ENCODE measurements at regions of chr15 and their contacts with region 1.

Region 1: GRCh38 chr15:52735231-52736089 is 54.7 kb downstream of the ONECUT1 start:
- DNase-seq: peak; percentile 64 to 67 (median 66)
- H3K4me3 ChIP-seq: no peak overlapping the region
- H3K4me3 Mint-ChIP-seq: no peak overlapping the region
- H3K27ac ChIP-seq: no peak overlapping the region
- H3K27ac Mint-ChIP-seq: no peak overlapping the region
- H3K4me1 ChIP-seq: no peaks in the 10 kb centered on the region
- H3K4me1 Mint-ChIP-seq: peaks cover 8% of the 10 kb centered on the region
- H3K27me3 ChIP-seq: no peaks in the 10 kb centered on the region
- H3K27me3 Mint-ChIP-seq: peaks cover 0 to 6% (median 3%) of the 10 kb centered on the region in 3 donors
- CTCF ChIP-seq: peak; percentile 86

Region 2: GRCh38 chr15:52256366-52256765 is 479.1 kb before region 1 on chr15:
- intact Hi-C with region 1: loop called (anchors 1 to 5 kb)
- DNase-seq: peak; percentile 57 to 69 (median 67)
- H3K4me3 ChIP-seq: no peak overlapping the region
- H3K4me3 Mint-ChIP-seq: peak overlapping the region; percentile 14 to 69
- H3K27ac ChIP-seq: no peak overlapping the region
- H3K27ac Mint-ChIP-seq: peak overlapping the region in 1 of 7 donors; percentile 8
- H3K4me1 ChIP-seq: peaks cover 16 to 29% of the 10 kb centered on the region in 2 donors
- H3K4me1 Mint-ChIP-seq: peaks cover 21% of the 10 kb centered on the region
- H3K27me3 ChIP-seq: no peaks in the 10 kb centered on the region
- H3K27me3 Mint-ChIP-seq: peaks cover 0 to 4% (median 1%) of the 10 kb centered on the region in 3 donors
- CTCF ChIP-seq: peak; percentile 67

Region 3: GRCh38 chr15:52331490-52332240 is 403.8 kb before region 1 on chr15:
- intact Hi-C with region 1: loop called in 1 of 2 experiments (anchors 10 kb)
- DNase-seq: peak in 1 of 3 donors; percentile 13
- H3K4me3 ChIP-seq: no peak overlapping the region
- H3K4me3 Mint-ChIP-seq: no peak overlapping the region
- H3K27ac ChIP-seq: no peak overlapping the region
- H3K27ac Mint-ChIP-seq: no peak overlapping the region
- H3K4me1 ChIP-seq: no peaks in the 10 kb centered on the region
- H3K4me1 Mint-ChIP-seq: peaks cover 2% of the 10 kb centered on the region
- H3K27me3 ChIP-seq: no peaks in the 10 kb centered on the region
- H3K27me3 Mint-ChIP-seq: no peaks in the 10 kb centered on the region
- CTCF ChIP-seq: peak; percentile 29

Measured in CD14-positive monocyte (primary cell).